ENCODE measurements at regions of chr19 and their contacts with region 1.

Region 1: DNA sequence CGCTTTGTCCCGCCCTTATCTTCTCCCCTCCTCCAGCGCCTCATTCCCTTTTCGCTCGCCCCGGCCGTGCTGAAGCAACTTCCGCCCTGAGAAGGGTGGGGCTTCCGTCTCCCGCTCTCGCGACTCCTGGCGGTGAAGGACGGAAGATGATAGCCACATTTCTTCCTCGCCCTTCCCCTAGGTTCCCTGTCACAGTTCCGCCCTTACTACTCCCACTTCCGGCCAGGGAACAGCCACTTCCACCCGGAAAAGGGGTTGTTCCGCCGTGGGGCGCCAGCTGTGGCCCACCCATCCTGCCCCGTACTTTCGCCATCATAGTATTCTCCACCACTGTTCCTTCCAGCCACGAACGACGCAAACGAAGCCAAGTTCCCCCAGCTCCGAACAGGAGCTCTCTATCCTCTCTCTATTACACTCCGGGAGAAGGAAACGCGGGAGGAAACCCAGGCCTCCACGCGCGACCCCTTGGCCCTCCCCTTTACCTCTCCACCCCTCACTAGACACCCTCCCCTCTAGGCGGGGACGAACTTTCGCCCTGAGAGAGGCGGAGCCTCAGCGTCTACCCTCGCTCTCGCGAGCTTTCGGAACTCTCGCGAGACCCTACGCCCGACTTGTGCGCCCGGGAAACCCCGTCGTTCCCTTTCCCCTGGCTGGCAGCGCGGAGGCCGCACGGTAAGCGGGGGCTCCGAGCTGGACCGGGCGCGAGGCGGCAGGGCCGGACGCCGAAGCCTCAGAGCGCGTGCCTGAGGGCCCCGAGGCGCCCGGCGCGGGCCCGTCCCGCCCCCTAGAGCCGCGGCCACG is at the start of gene RPS19:
- DNase-seq: peak; percentile 99
- ATAC-seq: peak; percentile 84
- H3K4me3 ChIP-seq: peak within 1 kb of the TSS; percentile 75 to 96 (median 75)
- H3K4me3 Mint-ChIP-seq: peak within 1 kb of the TSS; percentile 92
- H3K27ac ChIP-seq: peak within 1 kb of the TSS; percentile 92 to 94
- H3K27ac Mint-ChIP-seq: peak within 1 kb of the TSS; percentile 97
- H3K4me1 ChIP-seq: peaks cover 40 to 48% of the 10 kb centered on the region in 2 donors
- H3K4me1 Mint-ChIP-seq: peaks cover 45% of the 10 kb centered on the region
- H3K27me3 ChIP-seq: no peaks in the 10 kb centered on the region
- H3K27me3 Mint-ChIP-seq: no peaks in the 10 kb centered on the region
- CTCF ChIP-seq: peak; percentile 86
- total RNA-seq, gene RPS19: 3,294 and 3,322 TPM in 2 replicates

Region 2: DNA sequence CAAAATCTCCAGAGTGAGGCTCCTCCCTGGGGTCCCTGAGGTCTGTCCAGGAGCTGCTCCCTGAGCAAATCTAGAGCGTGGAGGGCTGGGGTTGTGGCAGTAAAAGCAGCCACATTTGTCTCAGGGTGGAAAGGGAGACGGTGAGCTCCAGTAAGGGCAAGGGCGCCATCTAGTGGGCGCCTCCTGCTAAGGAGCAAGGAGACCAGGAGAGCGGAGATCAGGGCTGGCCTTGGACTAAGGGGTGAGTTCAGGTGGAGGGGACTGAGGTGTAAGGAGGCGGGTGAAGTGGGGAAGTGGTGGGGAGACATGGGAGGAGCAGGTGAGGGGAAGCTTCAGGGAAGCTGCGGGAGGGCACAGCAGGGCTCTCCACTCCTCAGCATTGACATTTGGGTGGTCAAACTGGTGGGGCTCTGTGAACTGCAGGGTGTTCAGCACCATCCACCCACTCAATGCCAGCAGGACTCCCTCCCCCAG is 289.1 kb before region 1 on chr19:
- CTCF ChIA-PET with region 1: no interaction called
- POLR2A ChIA-PET with region 1: no interaction called
- intact Hi-C with region 1: no loop called
- DNase-seq: peak; percentile 88
- ATAC-seq: peak; percentile 98
- H3K4me3 ChIP-seq: no peak overlapping the region
- H3K4me3 Mint-ChIP-seq: no peak overlapping the region
- H3K27ac ChIP-seq: no peak overlapping the region
- H3K27ac Mint-ChIP-seq: no peak overlapping the region
- H3K4me1 ChIP-seq: peaks cover 9 to 12% of the 10 kb centered on the region in 2 donors
- H3K4me1 Mint-ChIP-seq: peaks cover 11% of the 10 kb centered on the region
- H3K27me3 ChIP-seq: no peaks in the 10 kb centered on the region
- H3K27me3 Mint-ChIP-seq: peaks cover under 1% of the 10 kb centered on the region
- CTCF ChIP-seq: peak; percentile 91

Region 3: DNA sequence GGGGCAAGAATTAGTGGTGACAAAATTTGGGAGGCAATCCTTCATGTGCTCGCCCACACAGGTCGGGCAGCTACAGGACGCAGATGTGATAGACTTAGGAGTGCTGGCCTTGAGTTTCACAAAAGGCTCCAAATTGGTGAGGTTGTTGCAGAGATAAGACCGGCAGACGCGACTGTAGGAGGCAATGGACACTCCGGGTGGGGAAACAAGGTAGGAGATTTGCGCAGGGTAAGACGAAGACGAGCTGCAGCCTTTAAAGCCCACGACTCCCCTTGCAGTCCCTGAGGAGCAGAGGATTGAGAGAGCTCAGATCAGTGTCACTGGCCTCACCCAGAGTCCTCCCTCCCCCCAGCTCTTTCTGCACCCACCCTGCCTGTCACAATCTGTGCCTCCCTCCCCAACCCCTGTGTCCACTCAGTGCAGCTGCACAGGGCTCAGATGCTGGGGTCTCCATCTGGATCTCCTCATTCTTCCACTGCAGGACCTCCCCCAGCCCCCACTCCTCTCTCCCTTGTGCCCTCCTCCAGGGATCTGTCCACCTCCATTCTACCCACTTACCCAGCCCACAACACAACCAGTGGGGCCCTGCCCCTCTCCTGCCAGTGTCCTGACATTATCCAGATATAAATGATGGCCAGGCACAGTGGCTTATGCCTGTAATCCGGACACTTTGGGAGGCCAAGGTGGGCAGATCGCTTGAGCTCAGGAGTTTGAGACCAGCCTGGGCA is 21.7 kb before region 1 on chr19:
- CTCF ChIA-PET with region 1: interaction called, 15 read pairs
- POLR2A ChIA-PET with region 1: no interaction called
- intact Hi-C with region 1: no loop called
- DNase-seq: no peak
- ATAC-seq: no peak
- H3K4me3 ChIP-seq: no peak overlapping the region
- H3K4me3 Mint-ChIP-seq: no peak overlapping the region
- H3K27ac ChIP-seq: no peak overlapping the region
- H3K27ac Mint-ChIP-seq: no peak overlapping the region
- H3K4me1 ChIP-seq: no peaks in the 10 kb centered on the region
- H3K4me1 Mint-ChIP-seq: no peaks in the 10 kb centered on the region
- H3K27me3 ChIP-seq: peaks cover 0 to 30% (median 10%) of the 10 kb centered on the region in 4 experiments
- H3K27me3 Mint-ChIP-seq: peaks cover 33% of the 10 kb centered on the region
- CTCF ChIP-seq: no peak

Region 4: GRCh38 chr19:41883821-41884733 is 24.3 kb after region 1 on chr19:
- CTCF ChIA-PET with region 1: interaction called, 54 read pairs
- POLR2A ChIA-PET with region 1: interaction called, 57 read pairs
- intact Hi-C with region 1: loop called (anchors 1 kb)
- DNase-seq: peak; percentile 95
- ATAC-seq: peak; percentile 78
- H3K4me3 ChIP-seq: peak overlapping the region; percentile 83 to 100 (median 97)
- H3K4me3 Mint-ChIP-seq: peak overlapping the region; percentile 93
- H3K27ac ChIP-seq: peak overlapping the region; percentile 72 to 87
- H3K27ac Mint-ChIP-seq: peak overlapping the region; percentile 98
- H3K4me1 ChIP-seq: peaks cover 72 to 83% of the 10 kb centered on the region in 2 donors
- H3K4me1 Mint-ChIP-seq: peaks cover 78% of the 10 kb centered on the region
- H3K27me3 ChIP-seq: no peaks in the 10 kb centered on the region
- H3K27me3 Mint-ChIP-seq: no peaks in the 10 kb centered on the region
- CTCF ChIP-seq: no peak

Region 5: GRCh38 chr19:41934849-41935374 is 75.1 kb after region 1 on chr19:
- CTCF ChIA-PET with region 1: interaction called, 12 read pairs
- POLR2A ChIA-PET with region 1: interaction called, 11 read pairs
- intact Hi-C with region 1: loop called (anchors 1 kb)
- DNase-seq: peak; percentile 88
- ATAC-seq: peak; percentile 84
- H3K4me3 ChIP-seq: no peak overlapping the region
- H3K4me3 Mint-ChIP-seq: peak overlapping the region; percentile 33
- H3K27ac ChIP-seq: peak overlapping the region in 1 of 2 donors; percentile 55
- H3K27ac Mint-ChIP-seq: peak overlapping the region; percentile 86
- H3K4me1 ChIP-seq: peaks cover 42 to 69% of the 10 kb centered on the region in 2 donors
- H3K4me1 Mint-ChIP-seq: peaks cover 53% of the 10 kb centered on the region
- H3K27me3 ChIP-seq: peaks cover 0 to 10% (median 0%) of the 10 kb centered on the region in 4 experiments
- H3K27me3 Mint-ChIP-seq: no peaks in the 10 kb centered on the region
- CTCF ChIP-seq: peak; percentile 89

Region 6: GRCh38 chr19:41945135-41945766 is 85.4 kb after region 1 on chr19:
- CTCF ChIA-PET with region 1: interaction called, 331 read pairs
- POLR2A ChIA-PET with region 1: interaction called, 20 read pairs
- intact Hi-C with region 1: no loop called
- DNase-seq: peak; percentile 97
- ATAC-seq: peak; percentile 87
- H3K4me3 ChIP-seq: peak overlapping the region in 1 of 5 experiments; percentile 23
- H3K4me3 Mint-ChIP-seq: peak overlapping the region; percentile 81
- H3K27ac ChIP-seq: peak overlapping the region; percentile 94 to 96
- H3K27ac Mint-ChIP-seq: peak overlapping the region; percentile 100
- H3K4me1 ChIP-seq: peaks cover 57 to 71% of the 10 kb centered on the region in 2 donors
- H3K4me1 Mint-ChIP-seq: peaks cover 71% of the 10 kb centered on the region
- H3K27me3 ChIP-seq: no peaks in the 10 kb centered on the region
- H3K27me3 Mint-ChIP-seq: no peaks in the 10 kb centered on the region
- CTCF ChIP-seq: no peak

Region 7: GRCh38 chr19:41959056-41960053 is 99.5 kb after region 1 on chr19 and contains the start of gene RABAC1:
- CTCF ChIA-PET with region 1: interaction called, 331 read pairs
- POLR2A ChIA-PET with region 1: interaction called, 13 read pairs
- intact Hi-C with region 1: loop called (anchors 1 kb)
- DNase-seq: peak; percentile 89
- ATAC-seq: peak; percentile 90
- H3K4me3 ChIP-seq: peak within 1 kb of the TSS; percentile 57 to 94 (median 81)
- H3K4me3 Mint-ChIP-seq: peak within 1 kb of the TSS; percentile 99
- H3K27ac ChIP-seq: peak within 1 kb of the TSS; percentile 78
- H3K27ac Mint-ChIP-seq: peak within 1 kb of the TSS; percentile 89
- H3K4me1 ChIP-seq: peaks cover 10 to 22% of the 10 kb centered on the region in 2 donors
- H3K4me1 Mint-ChIP-seq: peaks cover 18% of the 10 kb centered on the region
- H3K27me3 ChIP-seq: no peaks in the 10 kb centered on the region
- H3K27me3 Mint-ChIP-seq: no peaks in the 10 kb centered on the region
- CTCF ChIP-seq: peak; percentile 44
- total RNA-seq, gene RABAC1: 139 and 146 TPM in 2 replicates

Region 8: GRCh38 chr19:42075616-42076379 is 216.0 kb after region 1 on chr19 and contains the start of gene ZNF574:
- CTCF ChIA-PET with region 1: no interaction called
- POLR2A ChIA-PET with region 1: interaction called, 5 read pairs
- intact Hi-C with region 1: loop called (anchors 1 kb)
- DNase-seq: peak; percentile 100
- ATAC-seq: peak; percentile 94
- H3K4me3 ChIP-seq: peak within 1 kb of the TSS; percentile 56 to 93 (median 86)
- H3K4me3 Mint-ChIP-seq: peak within 1 kb of the TSS; percentile 97
- H3K27ac ChIP-seq: peak within 1 kb of the TSS; percentile 95 to 99
- H3K27ac Mint-ChIP-seq: peak within 1 kb of the TSS; percentile 99
- H3K4me1 ChIP-seq: peaks cover 20 to 23% of the 10 kb centered on the region in 2 donors
- H3K4me1 Mint-ChIP-seq: peaks cover 35% of the 10 kb centered on the region
- H3K27me3 ChIP-seq: no peaks in the 10 kb centered on the region
- H3K27me3 Mint-ChIP-seq: peaks cover 5% of the 10 kb centered on the region
- CTCF ChIP-seq: no peak
- total RNA-seq, gene ZNF574: 27.4 and 28.4 TPM in 2 replicates